IMR-90 (cell line): ENCODE measurements at regions of chr1 and their contacts with region 1.

Region 1: DNA sequence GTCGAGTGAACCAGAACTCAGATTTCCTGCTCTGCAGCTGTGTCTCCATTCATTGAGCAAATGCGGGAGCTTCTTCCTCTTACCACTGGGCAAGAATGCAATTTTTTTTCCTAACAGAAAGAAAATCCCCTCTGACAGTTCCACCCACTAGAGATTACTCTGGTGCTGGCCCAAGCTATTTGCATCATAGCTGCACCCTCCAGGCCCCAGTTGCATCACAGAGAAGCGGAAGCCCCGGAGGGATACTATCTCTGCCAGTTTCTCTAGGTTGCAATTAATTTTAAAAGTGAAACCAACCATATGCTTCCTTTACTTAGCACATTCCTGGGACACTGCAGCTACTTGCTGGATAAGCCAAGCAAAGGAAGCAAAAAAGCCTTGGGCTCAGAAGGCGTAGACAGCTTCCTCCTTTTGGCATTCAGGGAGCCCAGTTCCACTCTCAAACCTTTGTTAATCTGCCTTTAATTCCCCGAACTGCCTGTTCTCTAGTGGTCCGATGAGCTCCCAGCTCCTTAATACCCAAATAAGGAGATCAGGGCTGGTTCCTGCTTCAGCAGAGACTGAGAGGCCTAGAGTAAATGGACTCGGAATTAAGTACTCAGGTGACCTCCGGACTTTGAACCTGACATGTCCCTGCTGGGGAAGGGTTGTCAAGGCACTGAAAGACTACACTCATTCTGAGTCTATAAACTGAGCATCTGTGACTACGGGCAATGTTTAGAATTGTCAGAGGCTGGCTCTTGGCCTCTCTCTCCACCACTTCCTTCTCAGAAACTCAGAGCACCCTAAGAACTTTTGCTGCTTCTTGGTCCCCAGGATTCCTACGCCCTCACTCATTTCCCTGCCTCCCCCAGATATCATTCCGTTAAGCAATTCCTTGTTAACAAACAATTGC is 72.5 kb upstream of the TNFSF18 start:
- DNase-seq: peak; percentile 95
- ATAC-seq: peak; percentile 85
- H3K4me3 ChIP-seq: peak overlapping the region; percentile 27
- H3K27ac ChIP-seq: peak overlapping the region; percentile 87
- H3K4me1 ChIP-seq: peaks cover 8% of the 10 kb centered on the region
- H3K27me3 ChIP-seq: no peaks in the 10 kb centered on the region
- CTCF ChIP-seq: no peak
- POLR2A ChIP-seq: no peak
- RAD21 ChIP-seq: peak; percentile 9; the same call in 1 of the 2 replicates

Region 2: DNA sequence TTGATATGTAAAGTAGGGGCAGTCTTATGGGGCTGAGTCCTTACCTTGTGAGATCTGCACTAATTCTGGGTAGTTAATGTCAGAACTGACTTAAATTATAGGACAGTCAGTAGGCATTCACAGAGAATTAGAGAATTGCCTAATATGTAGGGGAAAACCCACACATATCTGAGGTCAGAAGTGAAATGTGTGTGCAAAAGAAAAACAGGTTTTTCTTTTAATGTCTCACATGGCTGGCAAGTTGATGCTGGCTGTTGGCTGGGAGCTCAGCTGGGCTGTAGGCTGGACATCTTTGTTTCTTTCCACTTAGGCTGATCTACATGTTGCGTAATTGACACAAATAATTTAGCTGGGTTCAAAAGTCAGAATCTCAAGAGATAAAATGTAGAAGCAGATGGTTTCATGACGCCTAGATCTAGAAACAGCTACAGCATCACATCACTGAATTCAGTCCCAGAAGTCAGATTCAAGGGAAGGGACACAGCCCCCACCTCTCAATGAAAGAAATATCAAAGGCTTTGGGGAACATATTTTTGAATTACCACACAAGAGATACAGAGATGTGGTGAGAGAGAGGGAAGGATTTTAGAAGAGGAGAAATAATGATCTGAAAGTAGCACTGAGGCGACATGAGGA is 171.4 kb before region 1 on chr1:
- CTCF ChIA-PET with region 1: no interaction called
- POLR2A ChIA-PET with region 1: no interaction called
- dilution Hi-C with region 1: no loop called
- in situ Hi-C with region 1: no loop called
- intact Hi-C with region 1: loop called (anchors 10 kb)
- DNase-seq: peak; percentile 91
- ATAC-seq: peak; percentile 19
- H3K4me3 ChIP-seq: no peak overlapping the region
- H3K27ac ChIP-seq: peak overlapping the region; percentile 81; the same call in 1 of the 2 replicates
- H3K4me1 ChIP-seq: peaks cover 32% of the 10 kb centered on the region
- H3K27me3 ChIP-seq: no peaks in the 10 kb centered on the region
- CTCF ChIP-seq: no peak
- POLR2A ChIP-seq: no peak
- RAD21 ChIP-seq: no peak

Region 3: GRCh38 chr1:173062156-173062938 is 60.9 kb before region 1 on chr1:
- CTCF ChIA-PET with region 1: no interaction called
- POLR2A ChIA-PET with region 1: no interaction called
- dilution Hi-C with region 1: no loop called
- in situ Hi-C with region 1: loop called (anchors 10 kb)
- intact Hi-C with region 1: no loop called
- DNase-seq: peak; percentile 80
- ATAC-seq: peak; percentile 80
- H3K4me3 ChIP-seq: no peak overlapping the region
- H3K27ac ChIP-seq: no peak overlapping the region
- H3K4me1 ChIP-seq: peaks cover 8% of the 10 kb centered on the region; the same call in 1 of the 2 replicates
- H3K27me3 ChIP-seq: no peaks in the 10 kb centered on the region
- CTCF ChIP-seq: no peak
- POLR2A ChIP-seq: no peak
- RAD21 ChIP-seq: no peak

Region 4: GRCh38 chr1:173489149-173489934 is 366.1 kb after region 1 on chr1:
- CTCF ChIA-PET with region 1: no interaction called
- POLR2A ChIA-PET with region 1: no interaction called
- dilution Hi-C with region 1: no loop called
- in situ Hi-C with region 1: no loop called
- intact Hi-C with region 1: no loop called
- DNase-seq: peak; percentile 20
- ATAC-seq: no peak; the same call in 1 of the 2 replicates
- H3K4me3 ChIP-seq: no peak overlapping the region
- H3K27ac ChIP-seq: no peak overlapping the region
- H3K4me1 ChIP-seq: no peaks in the 10 kb centered on the region
- H3K27me3 ChIP-seq: no peaks in the 10 kb centered on the region
- CTCF ChIP-seq: no peak
- POLR2A ChIP-seq: no peak
- RAD21 ChIP-seq: no peak